IMR-90 (cell line): ENCODE measurements at regions of chr20 and their contacts with region 1.

Region 1: GRCh38 chr20:10636326-10636818 is 37.4 kb downstream of the JAG1 start:
- DNase-seq: peak; percentile 64
- ATAC-seq: peak; percentile 9; the same call in 1 of the 2 replicates
- H3K4me3 ChIP-seq: no peak overlapping the region
- H3K27ac ChIP-seq: peak overlapping the region; percentile 21; the same call in 1 of the 2 replicates
- H3K4me1 ChIP-seq: peaks cover 24% of the 10 kb centered on the region
- H3K27me3 ChIP-seq: no peaks in the 10 kb centered on the region
- CTCF ChIP-seq: no peak
- POLR2A ChIP-seq: no peak
- RAD21 ChIP-seq: no peak

Region 2: GRCh38 chr20:10596726-10597125 is 39.6 kb before region 1 on chr20:
- CTCF ChIA-PET with region 1: interaction called, 3 read pairs
- POLR2A ChIA-PET with region 1: no interaction called
- dilution Hi-C with region 1: no loop called
- in situ Hi-C with region 1: no loop called
- intact Hi-C with region 1: loop called (anchors 5 kb)
- DNase-seq: peak; percentile 95
- ATAC-seq: peak; percentile 72
- H3K4me3 ChIP-seq: no peak overlapping the region
- H3K27ac ChIP-seq: no peak overlapping the region
- H3K4me1 ChIP-seq: peaks cover 18% of the 10 kb centered on the region
- H3K27me3 ChIP-seq: no peaks in the 10 kb centered on the region
- CTCF ChIP-seq: no peak
- POLR2A ChIP-seq: no peak
- RAD21 ChIP-seq: no peak

Region 3: DNA sequence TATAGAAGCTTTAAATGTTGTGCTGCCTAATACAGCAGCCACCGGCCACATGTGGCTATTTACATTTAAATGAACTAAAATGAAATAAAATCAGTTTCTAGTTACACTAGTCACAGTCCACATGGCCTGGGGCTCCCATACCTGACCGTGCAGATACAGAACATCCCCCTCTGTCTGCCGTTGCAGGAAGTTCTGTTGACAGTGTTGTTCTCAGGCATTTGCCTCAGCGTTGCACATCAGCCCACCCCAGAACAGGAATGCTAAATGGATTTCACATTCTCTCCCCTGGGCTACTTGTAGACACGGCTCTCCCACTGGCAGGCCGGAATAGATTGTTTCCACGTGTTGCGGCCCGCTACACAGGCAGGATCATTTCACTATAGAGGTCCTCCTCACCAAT is 11.1 kb after region 1 on chr20:
- CTCF ChIA-PET with region 1: interaction called, 3 read pairs
- POLR2A ChIA-PET with region 1: interaction called, 11 read pairs
- dilution Hi-C with region 1: no loop called
- in situ Hi-C with region 1: no loop called
- intact Hi-C with region 1: no loop called
- DNase-seq: no peak
- ATAC-seq: no peak
- H3K4me3 ChIP-seq: no peak overlapping the region
- H3K27ac ChIP-seq: no peak overlapping the region
- H3K4me1 ChIP-seq: peaks cover 27% of the 10 kb centered on the region
- H3K27me3 ChIP-seq: no peaks in the 10 kb centered on the region
- CTCF ChIP-seq: no peak
- POLR2A ChIP-seq: no peak
- RAD21 ChIP-seq: peak; percentile 8; the same call in 1 of the 2 replicates

Region 4: DNA sequence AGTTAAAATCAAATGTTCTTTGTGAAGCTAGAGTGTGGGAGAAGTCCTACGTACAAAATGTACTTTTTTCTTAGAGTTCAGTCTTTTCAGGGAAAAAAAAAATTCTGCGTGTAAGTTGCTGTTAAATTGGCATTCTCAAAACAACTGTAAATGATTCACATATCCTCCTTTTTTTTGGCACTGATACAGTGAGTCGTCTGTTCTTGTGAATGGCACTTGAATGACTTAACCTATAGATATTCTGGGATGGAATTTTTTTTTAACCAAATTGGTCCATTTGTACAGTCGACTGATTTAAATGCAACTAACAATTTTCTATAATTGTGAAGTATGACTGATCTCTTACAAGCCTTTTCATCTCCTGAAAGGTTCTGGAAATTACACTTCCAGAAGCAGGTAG is 42.9 kb after region 1 on chr20:
- CTCF ChIA-PET with region 1: no interaction called
- POLR2A ChIA-PET with region 1: no interaction called
- dilution Hi-C with region 1: no loop called
- in situ Hi-C with region 1: no loop called
- intact Hi-C with region 1: no loop called
- DNase-seq: peak; percentile 30
- ATAC-seq: no peak
- H3K4me3 ChIP-seq: no peak overlapping the region
- H3K27ac ChIP-seq: no peak overlapping the region
- H3K4me1 ChIP-seq: 0 out of 2 replicates have a peak, but pooled peaks cover 3% of the 10 kb centered on the region
- H3K27me3 ChIP-seq: no peaks in the 10 kb centered on the region
- CTCF ChIP-seq: no peak
- POLR2A ChIP-seq: no peak
- RAD21 ChIP-seq: no peak